MCF 10A (cell line): ENCODE measurements at regions of chr1 and their contacts with region 1.

Region 1: DNA sequence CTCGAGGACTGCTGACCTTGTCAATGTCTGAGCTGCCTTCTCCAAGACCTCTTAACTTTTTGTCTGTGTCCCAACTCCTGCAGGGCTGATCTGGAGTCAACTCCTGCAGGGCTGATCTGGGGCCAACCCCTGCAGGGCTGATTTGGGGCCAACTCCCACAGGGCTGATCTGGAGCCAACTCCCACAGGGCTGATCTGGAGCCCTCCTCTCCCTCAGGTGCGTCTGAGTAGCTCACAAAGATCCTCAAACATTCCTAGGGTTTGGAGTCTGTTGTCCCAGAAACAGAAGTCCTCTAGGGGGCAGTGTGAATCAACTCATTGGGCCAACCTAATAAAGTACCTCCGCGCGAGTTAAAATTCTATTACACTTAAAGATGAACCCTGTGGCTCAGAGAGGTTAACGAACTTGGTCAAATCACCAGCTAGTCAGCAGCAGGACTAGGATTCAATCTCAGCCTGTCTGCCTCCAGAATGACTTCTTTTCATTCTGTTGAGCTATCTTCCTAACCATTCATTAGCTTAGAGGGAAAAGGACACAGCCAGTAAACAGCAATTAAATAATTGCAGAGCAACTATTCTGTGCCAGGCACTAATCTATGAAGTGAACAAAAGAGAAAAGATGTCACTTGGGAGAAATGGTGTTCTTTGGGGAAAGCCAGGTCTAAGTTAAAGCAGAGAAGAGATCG is 17.2 kb upstream of the RLF start:
- DNase-seq: peak; percentile 87
- H3K4me3 Mint-ChIP-seq: no peak overlapping the region
- H3K27ac Mint-ChIP-seq: no peak overlapping the region
- H3K4me1 Mint-ChIP-seq: peaks cover 10% of the 10 kb centered on the region
- H3K27me3 Mint-ChIP-seq: peaks cover 74% of the 10 kb centered on the region
- CTCF ChIP-seq: peak; percentile 61

Region 2: DNA sequence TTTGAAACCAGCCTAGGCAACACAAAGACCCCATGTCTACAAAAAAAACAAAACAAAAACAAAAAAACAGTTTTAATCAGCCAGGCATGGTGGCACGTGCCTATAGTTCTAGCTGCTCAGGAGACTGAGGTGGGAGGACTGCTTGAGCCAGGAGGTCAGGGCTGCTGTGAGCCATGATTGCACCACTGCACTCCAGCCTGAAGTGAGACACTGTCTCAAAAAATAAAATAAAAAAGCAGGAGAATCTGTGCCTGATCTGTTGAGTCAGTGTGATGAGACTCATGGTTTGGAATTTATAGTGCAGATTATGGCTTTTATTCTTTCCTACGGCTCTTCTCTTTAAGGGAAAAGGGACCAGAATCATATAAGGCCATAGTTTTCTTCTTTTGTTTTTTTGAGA is 277.3 kb before region 1 on chr1:
- CTCF ChIA-PET with region 1: no interaction called
- POLR2A ChIA-PET with region 1: no interaction called
- intact Hi-C with region 1: no loop called
- DNase-seq: no peak
- H3K4me3 Mint-ChIP-seq: no peak overlapping the region
- H3K27ac Mint-ChIP-seq: no peak overlapping the region
- H3K4me1 Mint-ChIP-seq: peaks cover 12% of the 10 kb centered on the region
- H3K27me3 Mint-ChIP-seq: no peaks in the 10 kb centered on the region
- CTCF ChIP-seq: no peak

Region 3: DNA sequence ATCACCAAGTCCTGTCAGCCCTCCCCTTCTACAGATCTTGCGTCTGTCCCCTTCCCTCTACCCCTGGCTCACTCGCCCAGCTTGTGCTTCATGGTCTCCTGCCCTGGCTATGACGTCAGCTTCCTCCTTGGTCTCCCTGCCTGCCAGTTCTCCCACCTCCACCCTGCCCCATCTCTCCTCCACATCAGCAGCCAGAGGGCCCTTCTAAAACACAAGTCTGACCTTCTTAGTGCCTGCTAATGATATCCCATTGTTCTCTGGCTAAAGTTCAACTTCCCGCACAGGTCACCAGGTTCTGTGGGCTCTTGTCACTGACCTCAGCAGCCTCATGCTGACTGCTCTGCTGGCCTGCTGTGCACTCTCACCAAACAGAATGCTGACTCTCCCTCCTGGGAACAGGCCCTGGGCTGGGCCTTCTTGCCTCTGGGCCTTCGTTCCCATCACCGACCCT is 217.7 kb before region 1 on chr1:
- CTCF ChIA-PET with region 1: no interaction called
- POLR2A ChIA-PET with region 1: no interaction called
- intact Hi-C with region 1: no loop called
- DNase-seq: peak; percentile 63
- H3K4me3 Mint-ChIP-seq: peak overlapping the region; percentile 20
- H3K27ac Mint-ChIP-seq: peak overlapping the region; percentile 81
- H3K4me1 Mint-ChIP-seq: peaks cover 49% of the 10 kb centered on the region
- H3K27me3 Mint-ChIP-seq: no peaks in the 10 kb centered on the region
- CTCF ChIP-seq: no peak

Region 4: DNA sequence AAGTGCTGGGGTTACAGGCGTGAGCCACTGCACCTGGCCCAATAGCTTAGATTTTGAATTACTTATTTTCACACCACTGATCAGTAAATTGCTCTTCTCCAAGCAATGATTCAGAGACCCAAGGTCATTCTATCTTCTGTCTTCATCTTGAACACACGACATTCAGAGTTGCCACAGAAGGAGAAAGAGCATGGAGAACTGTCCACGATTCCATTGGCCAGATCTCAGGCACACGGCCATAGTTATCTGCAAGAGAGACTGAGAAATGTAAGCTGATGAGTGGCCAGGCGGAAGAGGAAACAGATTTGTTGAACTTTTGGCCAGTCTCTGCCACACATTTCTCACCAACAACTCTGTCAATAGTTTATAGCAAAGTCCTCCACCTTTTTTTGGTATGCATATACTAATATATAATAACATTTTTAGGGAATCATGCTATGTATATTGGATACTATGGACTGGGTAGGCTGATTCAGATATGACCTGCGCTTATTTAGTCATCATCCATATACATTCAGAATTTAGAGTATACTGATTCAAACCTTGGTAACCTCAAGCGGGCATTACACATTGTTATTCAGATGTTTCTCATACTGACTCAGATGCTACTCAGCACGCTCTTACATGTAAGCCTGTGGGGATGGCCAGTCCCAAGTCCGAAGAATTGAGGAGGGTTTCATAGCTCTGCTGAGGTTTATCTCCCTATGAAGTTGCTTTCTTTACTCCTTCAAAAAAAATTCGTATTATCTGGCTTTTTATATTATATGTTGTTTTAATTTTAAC is 129.0 kb before region 1 on chr1:
- CTCF ChIA-PET with region 1: no interaction called
- POLR2A ChIA-PET with region 1: no interaction called
- intact Hi-C with region 1: no loop called
- DNase-seq: peak; percentile 76
- H3K4me3 Mint-ChIP-seq: no peak overlapping the region
- H3K27ac Mint-ChIP-seq: peak overlapping the region; percentile 82
- H3K4me1 Mint-ChIP-seq: peaks cover 17% of the 10 kb centered on the region
- H3K27me3 Mint-ChIP-seq: no peaks in the 10 kb centered on the region
- CTCF ChIP-seq: no peak

Region 5: DNA sequence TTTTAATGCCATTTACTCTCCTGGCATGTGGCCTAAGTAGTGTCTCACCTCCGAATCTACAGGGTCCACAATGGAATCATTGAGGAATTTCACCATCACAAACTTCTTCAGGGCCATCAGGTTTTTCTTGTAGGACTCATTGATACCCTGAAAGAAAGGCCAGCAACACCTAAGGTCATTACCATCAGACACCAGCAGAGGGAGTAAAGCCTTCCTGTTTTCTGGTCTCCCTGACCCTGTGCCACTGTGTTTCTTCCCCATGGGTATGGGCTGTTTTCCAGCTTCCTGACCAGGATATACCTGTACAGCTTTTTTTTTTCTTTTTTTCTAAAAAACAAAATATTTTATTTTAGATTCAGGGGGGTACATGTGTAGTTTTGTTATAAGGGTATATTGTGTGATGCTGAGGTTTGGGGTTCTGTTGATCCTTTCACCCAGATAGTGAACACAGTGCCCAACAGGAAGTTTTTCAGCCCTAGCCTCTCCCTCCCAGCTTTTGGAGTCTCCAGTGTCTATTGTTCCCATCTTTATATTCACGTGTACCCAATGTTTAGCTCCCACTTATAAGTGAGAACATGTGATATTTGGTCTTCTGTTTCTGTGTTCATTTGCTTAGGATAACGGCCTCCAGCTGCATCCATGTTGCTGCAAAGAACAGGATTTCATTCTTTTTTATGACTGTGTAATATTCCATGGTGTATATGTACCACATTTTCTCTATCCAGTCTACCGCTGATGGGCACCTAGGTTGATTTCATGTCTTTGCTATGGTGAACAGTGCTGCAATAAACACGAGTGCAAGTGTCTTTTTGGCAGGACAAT is 65.3 kb before region 1 on chr1:
- CTCF ChIA-PET with region 1: interaction called, 7 read pairs
- POLR2A ChIA-PET with region 1: no interaction called
- intact Hi-C with region 1: loop called (anchors 10 kb)
- DNase-seq: peak; percentile 79
- H3K4me3 Mint-ChIP-seq: no peak overlapping the region
- H3K27ac Mint-ChIP-seq: no peak overlapping the region
- H3K4me1 Mint-ChIP-seq: peaks cover 13% of the 10 kb centered on the region
- H3K27me3 Mint-ChIP-seq: no peaks in the 10 kb centered on the region
- CTCF ChIP-seq: peak; percentile 65

Region 6: DNA sequence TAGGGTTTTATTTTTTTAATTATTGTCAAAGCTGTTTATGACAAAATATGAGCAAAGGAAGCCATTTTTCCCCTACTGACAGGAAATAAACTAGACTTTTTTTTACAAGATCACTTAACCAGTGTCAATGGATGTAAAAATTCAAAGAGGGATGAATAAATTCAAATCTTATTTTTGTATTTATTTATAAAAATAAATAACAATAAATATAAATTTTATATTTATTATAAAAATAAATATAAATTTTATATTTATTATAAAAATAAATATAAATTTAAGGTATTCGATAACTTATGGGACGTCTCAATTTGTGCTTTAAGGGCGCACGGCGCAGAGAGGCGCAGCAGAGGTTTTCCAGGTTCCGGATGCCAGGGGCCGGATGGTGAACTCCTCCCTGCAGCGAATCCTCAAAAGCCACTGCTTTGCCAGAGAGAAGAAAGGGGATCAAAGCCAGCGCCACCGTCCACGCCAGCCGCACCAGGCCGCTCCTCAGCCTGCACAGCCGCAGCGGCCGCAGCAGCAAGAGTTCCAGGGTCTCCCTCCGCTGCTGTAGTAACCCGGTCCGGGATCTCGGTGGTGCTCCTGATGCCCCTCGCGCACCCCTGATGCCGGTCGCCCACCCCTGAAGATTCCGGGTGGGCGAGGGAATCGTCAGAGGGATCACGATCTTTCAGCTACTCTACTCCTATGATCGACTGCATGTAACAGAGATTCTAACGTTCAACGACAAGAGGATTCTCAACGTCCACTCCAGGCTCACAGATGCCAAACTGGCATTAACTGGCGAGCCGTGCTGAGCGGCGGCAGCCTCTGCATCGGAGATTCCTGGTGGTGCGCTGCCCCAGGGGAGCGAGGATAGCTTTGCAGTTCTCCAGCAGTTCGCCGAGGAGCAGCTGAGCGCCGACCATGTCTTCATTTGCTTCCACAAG is 11.4 kb before region 1 on chr1:
- CTCF ChIA-PET with region 1: interaction called, 11 read pairs
- POLR2A ChIA-PET with region 1: no interaction called
- intact Hi-C with region 1: no loop called
- DNase-seq: no peak
- H3K4me3 Mint-ChIP-seq: no peak overlapping the region
- H3K27ac Mint-ChIP-seq: no peak overlapping the region
- H3K4me1 Mint-ChIP-seq: no peaks in the 10 kb centered on the region
- H3K27me3 Mint-ChIP-seq: peaks cover 24% of the 10 kb centered on the region
- CTCF ChIP-seq: no peak

Region 7: DNA sequence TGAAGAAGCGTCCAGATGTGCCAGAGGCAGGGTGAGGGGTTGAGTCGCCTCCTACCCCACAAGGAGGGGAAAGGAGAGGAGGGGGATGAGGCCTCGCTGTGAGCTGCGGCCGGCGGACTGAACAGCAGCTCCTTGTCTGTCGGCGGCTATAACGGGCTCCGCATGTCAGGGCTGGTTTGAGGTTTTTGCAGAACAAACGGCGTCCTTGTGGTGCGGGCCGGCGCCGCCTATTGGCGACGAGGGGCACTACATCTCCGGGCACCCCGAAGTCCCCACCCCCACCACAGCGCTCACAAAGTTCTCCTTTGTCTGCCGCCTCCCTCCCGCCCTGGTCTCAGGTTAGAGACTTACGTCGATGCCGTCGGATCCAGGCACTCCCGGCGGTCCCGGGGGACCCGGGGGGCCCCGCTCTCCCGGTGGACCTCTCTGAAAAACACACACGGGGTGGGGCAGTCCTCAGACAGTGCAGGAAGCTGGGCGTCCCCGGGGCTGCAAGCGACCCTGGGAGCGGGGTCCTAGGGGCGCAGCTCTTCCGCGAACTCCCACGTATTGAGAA is 171.3 kb after region 1 on chr1:
- CTCF ChIA-PET with region 1: interaction called, 10 read pairs
- POLR2A ChIA-PET with region 1: no interaction called
- intact Hi-C with region 1: no loop called
- DNase-seq: peak; percentile 74
- H3K4me3 Mint-ChIP-seq: peak overlapping the region; percentile 17
- H3K27ac Mint-ChIP-seq: no peak overlapping the region
- H3K4me1 Mint-ChIP-seq: peaks cover 7% of the 10 kb centered on the region
- H3K27me3 Mint-ChIP-seq: peaks cover 34% of the 10 kb centered on the region
- CTCF ChIP-seq: peak; percentile 92

Region 8: GRCh38 chr1:40404670-40405462 is 260.8 kb after region 1 on chr1:
- CTCF ChIA-PET with region 1: interaction called, 19 read pairs
- POLR2A ChIA-PET with region 1: interaction called, 3 read pairs
- intact Hi-C with region 1: loop called (anchors 1 kb)
- DNase-seq: peak; percentile 70
- H3K4me3 Mint-ChIP-seq: no peak overlapping the region
- H3K27ac Mint-ChIP-seq: no peak overlapping the region
- H3K4me1 Mint-ChIP-seq: peaks cover 4% of the 10 kb centered on the region
- H3K27me3 Mint-ChIP-seq: no peaks in the 10 kb centered on the region
- CTCF ChIP-seq: peak; percentile 63

Region 9: GRCh38 chr1:40438391-40439015 is 294.5 kb after region 1 on chr1:
- CTCF ChIA-PET with region 1: interaction called, 7 read pairs
- POLR2A ChIA-PET with region 1: no interaction called
- intact Hi-C with region 1: loop called (anchors 1 kb)
- DNase-seq: peak; percentile 17
- H3K4me3 Mint-ChIP-seq: no peak overlapping the region
- H3K27ac Mint-ChIP-seq: no peak overlapping the region
- H3K4me1 Mint-ChIP-seq: no peaks in the 10 kb centered on the region
- H3K27me3 Mint-ChIP-seq: no peaks in the 10 kb centered on the region
- CTCF ChIP-seq: peak; percentile 67